Dorsolateral prefrontal cortex (tissue), 120 donors: ENCODE measurements at regions of chr7 and their contacts with region 1.

Region 1: DNA sequence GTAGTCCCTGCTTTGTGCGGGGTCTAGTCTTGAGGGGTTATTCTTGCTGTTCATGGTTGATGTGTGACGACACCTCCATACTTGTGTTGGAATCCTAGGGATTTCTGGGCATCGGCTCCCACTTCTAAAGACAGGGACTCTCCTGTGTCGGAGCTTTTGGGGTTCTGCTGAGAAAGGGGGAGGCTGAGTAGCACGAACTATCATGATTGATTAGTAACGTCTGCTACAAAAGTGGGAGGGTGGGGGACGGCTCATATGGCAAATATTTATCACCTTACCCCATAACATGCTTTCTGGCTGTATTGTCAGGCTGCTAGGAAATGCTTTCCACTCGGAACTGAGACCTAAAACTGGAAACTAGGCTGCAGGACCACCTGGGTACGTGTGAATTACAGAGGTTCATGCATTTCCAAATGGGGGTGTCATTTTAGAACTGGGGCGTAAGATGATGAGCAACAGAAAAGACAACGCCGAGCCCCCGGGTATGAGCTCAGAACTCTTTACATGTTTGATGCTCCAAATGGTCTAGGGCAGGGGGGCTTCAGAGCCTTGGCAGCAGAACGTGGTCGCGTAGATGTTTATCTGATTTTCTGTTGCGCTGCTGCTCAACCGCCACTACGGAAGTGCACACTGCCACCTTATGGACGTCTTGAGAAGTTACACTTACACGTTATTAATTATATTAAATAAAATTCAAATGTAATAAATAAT is 15.1 kb upstream of the NME8 start:
- DNase-seq: peak in 7 of 10 donors; percentile 28 to 57 (median 38)
- H3K4me3 ChIP-seq: peak overlapping the region; percentile 22 to 71 (median 53)
- H3K27ac ChIP-seq: peak overlapping the region in 39 of 59 donors; percentile 4 to 88 (median 49)
- H3K27me3 ChIP-seq: peaks cover 0 to 4% (median 0%) of the 10 kb centered on the region in 45 donors
- CTCF ChIP-seq: peak; percentile 73 to 94 (median 84)

Region 2: GRCh38 chr7:36473454-36474282 is 1359.6 kb before region 1 on chr7:
- intact Hi-C with region 1: loop called in 1 of 2 experiments (anchors 5 kb)
- DNase-seq: peak; percentile 25 to 79 (median 65)
- H3K4me3 ChIP-seq: no peak overlapping the region
- H3K27ac ChIP-seq: no peak overlapping the region
- H3K27me3 ChIP-seq: no peaks in the 10 kb centered on the region
- CTCF ChIP-seq: peak in 54 of 56 donors; percentile 23 to 74 (median 59)

Region 3: GRCh38 chr7:37208528-37208927 is 624.7 kb before region 1 on chr7:
- intact Hi-C with region 1: loop called (anchors 2 to 5 kb)
- DNase-seq: peak in 9 of 10 donors; percentile 24 to 76 (median 66)
- H3K4me3 ChIP-seq: peak overlapping the region in 1 of 59 donors; percentile 4
- H3K27ac ChIP-seq: peak overlapping the region; percentile 2 to 95 (median 84)
- H3K27me3 ChIP-seq: no peaks in the 10 kb centered on the region
- CTCF ChIP-seq: peak; percentile 47 to 88 (median 75)

Region 4: DNA sequence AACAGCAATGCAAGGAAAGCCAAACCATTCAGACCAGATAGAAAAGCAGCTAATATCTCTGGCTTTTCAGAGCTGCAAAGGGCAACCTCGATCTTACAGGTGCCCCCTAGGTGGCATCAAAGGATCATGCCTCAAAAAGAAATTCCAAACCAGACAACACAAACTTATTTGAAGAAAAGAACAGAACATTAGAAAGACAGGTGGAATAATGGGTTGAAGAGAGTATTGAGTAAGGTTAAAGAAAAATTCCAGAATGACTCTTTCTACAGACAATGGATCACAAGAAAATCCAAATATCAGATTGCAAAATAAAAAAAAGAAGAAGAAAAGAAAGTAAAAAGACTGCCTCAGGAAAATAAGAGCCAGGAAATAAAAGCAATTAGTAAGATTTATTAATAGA is 598.3 kb before region 1 on chr7:
- intact Hi-C with region 1: loop called in 1 of 2 experiments (anchors 10 kb)
- DNase-seq: peak in 1 of 10 donors; percentile 11
- H3K4me3 ChIP-seq: no peak overlapping the region
- H3K27ac ChIP-seq: peak overlapping the region in 56 of 59 donors; percentile 14 to 100 (median 82)
- H3K27me3 ChIP-seq: peaks cover 0 to 4% (median 0%) of the 10 kb centered on the region in 45 donors
- CTCF ChIP-seq: peak; percentile 18 to 83 (median 69)

Region 5: DNA sequence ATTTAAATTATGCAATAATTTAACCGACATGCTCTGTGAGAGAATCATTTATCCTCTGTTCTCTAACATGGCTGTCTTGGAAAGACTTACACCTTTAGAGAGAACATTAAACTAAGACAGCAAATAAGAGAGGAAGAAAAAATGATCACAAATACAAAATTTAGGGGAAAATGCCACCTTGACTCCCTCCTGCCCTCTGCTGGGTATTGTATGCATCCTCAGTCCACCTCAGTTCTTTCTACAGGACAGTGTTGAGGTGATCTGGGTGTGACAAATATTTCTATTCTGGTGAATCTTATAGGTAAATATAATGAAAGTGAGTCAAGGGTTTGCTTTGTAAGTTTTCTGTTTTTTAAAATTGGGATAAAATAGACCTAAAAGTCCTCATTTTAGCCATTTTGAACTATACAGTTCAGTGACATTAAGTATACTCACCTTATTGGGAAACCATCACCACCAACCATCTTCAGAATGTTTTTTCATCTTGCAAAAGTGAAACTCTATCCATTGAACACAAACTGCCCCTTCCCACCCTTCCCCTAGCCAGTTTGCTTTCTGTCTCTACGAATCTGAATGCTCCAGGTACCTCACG is 323.1 kb before region 1 on chr7:
- intact Hi-C with region 1: loop called in 1 of 2 experiments (anchors 5 kb)
- DNase-seq: no peak
- H3K4me3 ChIP-seq: no peak overlapping the region
- H3K27ac ChIP-seq: peak overlapping the region in 17 of 59 donors; percentile 5 to 87 (median 33)
- H3K27me3 ChIP-seq: peaks cover 0 to 7% (median 0%) of the 10 kb centered on the region in 45 donors
- CTCF ChIP-seq: peak; percentile 38 to 89 (median 78)

Region 6: DNA sequence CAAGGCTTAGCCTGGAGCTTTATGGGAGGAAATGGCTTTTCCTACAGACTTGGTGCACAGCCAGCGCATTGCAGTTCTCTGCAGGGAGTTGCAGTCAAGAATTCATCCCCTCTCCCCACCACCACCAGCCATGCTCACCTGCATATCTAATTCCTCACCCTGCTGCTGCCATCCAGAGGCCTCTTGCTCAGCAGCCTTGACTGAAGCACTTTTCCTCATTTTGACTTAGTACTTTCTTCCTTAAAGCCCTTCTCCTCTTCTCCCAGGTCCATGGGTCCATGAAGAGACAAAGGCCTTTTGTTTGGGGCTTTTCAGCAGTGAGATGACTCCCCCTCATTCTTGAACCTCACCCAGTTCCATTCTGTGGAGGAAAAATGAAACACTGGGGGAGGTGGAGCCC is 189.4 kb before region 1 on chr7:
- intact Hi-C with region 1: no loop called
- DNase-seq: no peak
- H3K4me3 ChIP-seq: no peak overlapping the region
- H3K27ac ChIP-seq: no peak overlapping the region
- H3K27me3 ChIP-seq: peaks cover 0 to 8% (median 0%) of the 10 kb centered on the region in 45 donors
- CTCF ChIP-seq: peak in 5 of 56 donors; percentile 10 to 34 (median 15)

Region 7: GRCh38 chr7:37656913-37657530 is 176.2 kb before region 1 on chr7:
- intact Hi-C with region 1: no loop called
- DNase-seq: no peak
- H3K4me3 ChIP-seq: no peak overlapping the region
- H3K27ac ChIP-seq: no peak overlapping the region
- H3K27me3 ChIP-seq: peaks cover 0 to 4% (median 0%) of the 10 kb centered on the region in 45 donors
- CTCF ChIP-seq: no peak

Region 8: DNA sequence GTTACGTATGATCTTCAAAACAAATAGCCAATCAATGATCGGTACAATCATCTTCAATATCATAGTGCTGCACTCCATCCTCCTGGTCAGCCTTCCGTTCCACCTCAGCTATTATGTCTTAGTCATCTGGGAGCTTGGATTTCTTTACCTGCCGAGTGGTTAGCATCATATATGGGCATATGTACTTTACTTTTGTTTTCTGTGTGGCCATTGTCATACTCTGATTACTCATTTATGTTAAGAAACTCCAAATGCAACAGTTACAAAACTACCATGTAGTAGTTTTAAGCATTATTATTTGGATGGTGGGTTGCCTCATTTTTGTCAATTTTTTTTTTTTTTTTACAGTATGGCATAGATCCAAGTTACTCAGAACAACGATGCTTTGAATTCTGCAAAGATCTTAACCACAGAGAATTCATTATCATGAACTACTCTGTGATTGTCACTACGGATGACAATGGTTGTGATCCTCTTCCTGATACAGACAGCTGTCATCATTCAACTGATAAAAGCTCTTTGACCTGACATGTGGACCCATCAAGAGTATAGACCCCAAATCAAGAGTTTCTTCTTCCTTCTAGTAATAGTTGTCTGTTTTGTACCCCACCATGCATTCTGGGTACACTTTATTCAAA is 37.0 kb before region 1 on chr7:
- intact Hi-C with region 1: no loop called
- DNase-seq: no peak
- H3K4me3 ChIP-seq: no peak overlapping the region
- H3K27ac ChIP-seq: no peak overlapping the region
- H3K27me3 ChIP-seq: no peaks in the 10 kb centered on the region
- CTCF ChIP-seq: no peak